Left ventricle myocardium inferior (tissue), 1 donor: ENCODE measurements at regions of chr5 and their contacts with region 1.

Region 1: GRCh38 chr5:10761166-10761932 is at the start of gene DAP:
- DNase-seq: peak; percentile 88
- H3K4me3 ChIP-seq: peak within 1 kb of the TSS; percentile 87
- H3K27ac ChIP-seq: peak within 1 kb of the TSS; percentile 96
- H3K4me1 ChIP-seq: peaks cover 42% of the 10 kb centered on the region
- H3K27me3 ChIP-seq: no peaks in the 10 kb centered on the region
- CTCF ChIP-seq: no peak
- total RNA-seq, gene DAP: 22.9 TPM

Region 2: DNA sequence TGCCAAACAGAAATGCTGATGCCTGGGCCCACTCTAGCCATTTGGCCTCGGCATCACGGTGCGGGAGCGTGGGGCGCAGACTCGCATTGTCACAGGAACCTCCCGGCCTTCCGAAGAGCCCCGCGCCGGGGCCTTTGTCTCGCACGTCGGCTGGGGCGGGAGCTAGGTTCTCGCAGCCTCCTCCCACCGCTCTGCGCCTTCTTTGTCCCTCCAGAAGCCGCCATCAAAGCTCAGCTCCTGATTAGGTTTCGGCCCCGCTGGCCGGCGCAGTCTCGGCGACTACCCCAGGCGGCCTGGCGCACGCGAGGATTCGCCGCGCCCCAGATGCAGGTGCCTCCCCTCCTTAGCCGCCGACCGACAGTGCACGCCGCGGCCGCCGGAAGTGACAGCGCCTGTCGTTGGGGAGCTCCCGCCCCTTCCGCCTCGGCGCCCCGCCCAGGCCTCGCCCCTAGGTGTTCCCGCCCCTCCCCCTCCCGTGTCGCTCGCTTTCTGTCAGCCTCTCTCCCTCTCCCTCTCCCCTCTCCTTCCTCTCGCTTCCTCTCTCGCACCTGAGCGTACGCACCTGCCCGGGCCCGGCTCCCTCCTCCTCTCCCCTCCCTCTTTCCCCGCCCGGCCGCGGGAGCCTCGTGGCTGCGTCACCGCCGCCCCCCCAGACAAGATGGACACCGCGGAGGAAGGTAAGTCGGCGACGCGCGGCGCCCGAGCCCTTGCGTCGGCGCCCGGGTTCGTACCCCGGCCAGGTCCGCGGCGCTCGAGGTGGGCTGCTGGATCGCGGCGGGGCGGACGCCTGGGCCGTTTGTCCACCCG is 407.9 kb before region 1 on chr5 and contains the start of gene MARCHF6:
- intact Hi-C with region 1: loop called (anchors 10 kb)
- DNase-seq: peak; percentile 96
- H3K4me3 ChIP-seq: peak within 1 kb of the TSS; percentile 85
- H3K27ac ChIP-seq: peak within 1 kb of the TSS; percentile 98
- H3K4me1 ChIP-seq: peaks cover 73% of the 10 kb centered on the region
- H3K27me3 ChIP-seq: no peaks in the 10 kb centered on the region
- CTCF ChIP-seq: no peak
- total RNA-seq, gene MARCHF6: 162 TPM

Region 3: GRCh38 chr5:11377896-11378295 is 616.5 kb after region 1 on chr5:
- intact Hi-C with region 1: no loop called
- DNase-seq: no peak
- H3K4me3 ChIP-seq: no peak overlapping the region
- H3K27ac ChIP-seq: no peak overlapping the region
- H3K4me1 ChIP-seq: no peaks in the 10 kb centered on the region
- H3K27me3 ChIP-seq: peaks cover 13% of the 10 kb centered on the region
- CTCF ChIP-seq: no peak